Activated T-helper 2 cell treated with anti-CD3 and anti-CD28 coated beads, Interferon-gamma antibody, Interleukin-2, Interleukin-4, amounts not matched to agents 10 μg/mL and 5 μg/mL and 100 μg/mL, durations not matched to agents 14 hours and 24 hours and 36 hours (primary cell): ENCODE measurements at regions of chr11 and their contacts with region 1.

Region 1: DNA sequence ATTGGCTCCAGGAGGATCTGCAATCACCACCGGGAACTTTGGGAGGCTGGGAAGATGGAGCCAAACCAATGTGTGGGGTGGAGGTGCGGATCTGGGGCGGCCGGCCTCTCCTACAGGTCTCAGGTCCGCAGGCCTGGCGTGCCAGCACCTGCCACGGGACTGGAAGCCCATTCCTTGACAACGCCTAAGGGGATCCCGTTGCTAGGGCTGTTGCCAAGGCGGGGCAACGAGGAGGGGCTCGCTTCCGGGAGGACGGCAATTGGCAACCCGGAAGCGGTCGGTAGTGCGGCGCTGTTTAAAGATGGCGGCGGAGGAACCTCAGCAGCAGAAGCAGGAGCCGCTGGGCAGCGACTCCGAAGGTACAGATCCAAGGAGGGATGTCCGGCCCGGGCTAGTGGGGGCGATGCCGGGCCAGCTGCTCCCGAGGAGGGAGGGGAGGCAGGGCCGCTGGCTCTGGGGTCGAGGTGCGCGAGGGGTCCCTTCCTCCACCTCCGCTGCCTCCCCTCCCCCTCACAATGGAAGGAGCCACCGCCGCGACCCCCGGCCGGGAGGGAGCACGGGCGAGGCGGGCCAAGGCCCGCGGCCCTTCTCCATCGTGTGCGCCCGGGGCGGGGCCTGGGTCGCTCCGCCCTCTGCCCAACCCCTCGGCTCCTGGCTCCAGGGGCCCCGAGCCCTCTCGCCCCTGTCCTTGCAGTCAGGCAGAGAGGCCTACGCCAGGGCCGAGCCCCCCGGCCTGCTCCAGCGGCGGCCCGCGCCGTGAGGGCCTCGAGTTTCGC is at the start of gene OTUB1:
- DNase-seq: peak; percentile 83
- H3K4me3 Mint-ChIP-seq: peak within 1 kb of the TSS; percentile 98
- H3K27ac Mint-ChIP-seq: peak within 1 kb of the TSS; percentile 97
- H3K4me1 Mint-ChIP-seq: peaks cover 18% of the 10 kb centered on the region
- H3K27me3 Mint-ChIP-seq: no peaks in the 10 kb centered on the region
- total RNA-seq, gene OTUB1: 107 and 110 TPM in 2 replicates

Region 2: DNA sequence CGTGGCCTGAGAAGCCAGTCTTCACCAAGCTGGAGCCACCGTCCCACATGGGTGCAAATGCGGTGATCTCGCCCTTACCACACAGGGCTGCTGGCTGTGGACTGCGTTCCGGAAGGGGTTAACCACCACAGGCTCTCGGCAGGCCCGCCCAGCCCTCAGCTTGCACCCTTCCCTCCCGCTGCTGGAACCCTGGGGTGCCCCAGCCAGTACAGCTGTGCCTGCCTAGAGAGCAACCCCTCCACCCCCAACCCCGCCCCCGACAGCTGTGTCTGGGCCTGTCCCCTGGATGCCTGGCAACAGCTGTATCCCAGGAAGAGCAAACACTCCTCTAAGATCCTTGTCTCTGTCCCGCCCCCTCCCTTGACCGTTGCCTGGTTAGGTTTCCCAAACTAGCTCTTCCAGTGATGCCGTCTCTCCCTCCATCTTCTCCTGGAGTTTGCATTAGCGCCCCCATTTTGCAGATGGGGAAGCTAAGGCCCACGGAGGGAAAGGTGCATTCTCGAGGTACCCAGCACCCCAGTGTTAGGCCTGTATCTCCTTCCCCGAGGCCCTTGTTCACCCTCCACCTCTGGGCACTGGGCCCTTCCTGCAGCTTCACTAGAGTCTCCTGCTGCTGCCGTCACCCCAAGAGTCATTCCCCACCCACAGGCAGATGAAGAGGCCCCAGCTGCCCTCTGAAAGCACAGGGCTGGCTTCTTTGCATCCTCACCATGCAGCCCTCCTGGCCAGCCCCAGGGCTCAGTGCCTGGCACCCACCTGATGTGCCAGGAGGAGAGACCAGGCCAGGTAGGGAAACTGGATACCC is 24.5 kb before region 1 on chr11:
- intact Hi-C with region 1: loop called (anchors 1 kb)
- DNase-seq: peak; percentile 39
- H3K4me3 Mint-ChIP-seq: no peak overlapping the region
- H3K27ac Mint-ChIP-seq: peak overlapping the region; percentile 25
- H3K4me1 Mint-ChIP-seq: peaks cover 11% of the 10 kb centered on the region
- H3K27me3 Mint-ChIP-seq: no peaks in the 10 kb centered on the region

Region 3: GRCh38 chr11:63974259-63975143 is 11.8 kb before region 1 on chr11 and contains the start of gene COX8A:
- intact Hi-C with region 1: loop called (anchors 1 kb)
- DNase-seq: peak; percentile 98
- H3K4me3 Mint-ChIP-seq: peak within 1 kb of the TSS; percentile 100
- H3K27ac Mint-ChIP-seq: peak within 1 kb of the TSS; percentile 98
- H3K4me1 Mint-ChIP-seq: peaks cover 21% of the 10 kb centered on the region
- H3K27me3 Mint-ChIP-seq: no peaks in the 10 kb centered on the region
- total RNA-seq, gene COX8A: 312 and 326 TPM in 2 replicates